Activated B cell treated with CpG ODN at 0.5 μM for 24 hours (primary cell): ENCODE measurements at regions of chr18 and their contacts with region 1.

Region 1: GRCh38 chr18:77054606-77055428 is 77.8 kb downstream of the MBP start:
- DNase-seq: peak; percentile 57
- ATAC-seq: peak; percentile 65
- H3K4me3 Mint-ChIP-seq: peak overlapping the region; percentile 67
- H3K27ac Mint-ChIP-seq: peak overlapping the region; percentile 91
- H3K4me1 Mint-ChIP-seq: peaks cover 65% of the 10 kb centered on the region
- H3K27me3 Mint-ChIP-seq: no peaks in the 10 kb centered on the region
- CTCF ChIP-seq: no peak

Region 2: DNA sequence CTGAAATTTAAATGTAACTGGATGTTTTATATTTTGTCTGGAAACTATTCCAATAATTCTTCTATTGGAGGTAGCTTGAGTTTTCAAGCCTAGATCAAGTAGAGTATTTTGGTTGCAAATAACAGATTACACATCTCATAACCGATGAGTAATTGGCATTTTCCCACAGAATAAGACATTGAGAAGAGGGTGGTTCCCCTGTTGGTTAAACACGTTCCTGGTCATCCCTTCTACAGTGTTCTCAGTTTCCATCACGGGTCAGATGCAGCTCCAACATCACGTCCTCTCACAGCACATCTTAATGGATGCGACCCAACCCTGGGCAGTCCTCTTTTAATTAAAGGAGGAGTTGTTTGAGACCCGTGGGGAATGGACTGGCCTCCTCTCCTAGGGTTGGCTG is 410.8 kb before region 1 on chr18:
- CTCF ChIA-PET with region 1: no interaction called
- POLR2A ChIA-PET with region 1: no interaction called
- intact Hi-C with region 1: no loop called
- DNase-seq: no peak
- ATAC-seq: no peak
- H3K4me3 Mint-ChIP-seq: no peak overlapping the region
- H3K27ac Mint-ChIP-seq: no peak overlapping the region
- H3K4me1 Mint-ChIP-seq: no peaks in the 10 kb centered on the region
- H3K27me3 Mint-ChIP-seq: peaks cover 2% of the 10 kb centered on the region
- CTCF ChIP-seq: no peak

Region 3: DNA sequence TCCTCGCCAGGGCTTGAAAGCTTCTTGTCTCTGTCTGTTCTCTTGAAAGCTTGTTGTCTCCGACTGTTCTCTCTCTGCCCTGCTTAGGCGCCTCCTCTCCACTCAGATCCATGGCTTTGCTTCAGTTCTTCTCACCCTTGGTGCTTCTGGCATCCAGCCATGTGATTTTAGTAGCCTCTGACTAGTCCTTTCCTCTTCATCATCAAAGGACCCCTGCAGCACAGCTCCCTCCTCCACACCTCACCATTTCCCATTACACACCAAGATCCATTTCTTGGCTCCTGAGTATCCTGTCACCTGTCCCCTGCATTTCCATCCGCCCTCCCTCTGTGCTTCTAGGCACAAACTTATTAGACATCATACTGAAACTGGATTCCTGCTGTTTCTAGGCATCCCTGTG is 173.1 kb before region 1 on chr18:
- CTCF ChIA-PET with region 1: no interaction called
- POLR2A ChIA-PET with region 1: no interaction called
- intact Hi-C with region 1: no loop called
- DNase-seq: no peak
- ATAC-seq: no peak
- H3K4me3 Mint-ChIP-seq: no peak overlapping the region
- H3K27ac Mint-ChIP-seq: no peak overlapping the region
- H3K4me1 Mint-ChIP-seq: no peaks in the 10 kb centered on the region
- H3K27me3 Mint-ChIP-seq: no peaks in the 10 kb centered on the region
- CTCF ChIP-seq: no peak

Region 4: GRCh38 chr18:76963936-76964335 is 90.9 kb before region 1 on chr18:
- CTCF ChIA-PET with region 1: no interaction called
- POLR2A ChIA-PET with region 1: interaction called, 3 read pairs
- intact Hi-C with region 1: loop called (anchors 1 kb)
- DNase-seq: no peak
- ATAC-seq: no peak
- H3K4me3 Mint-ChIP-seq: peak overlapping the region; percentile 45
- H3K27ac Mint-ChIP-seq: no peak overlapping the region
- H3K4me1 Mint-ChIP-seq: no peaks in the 10 kb centered on the region
- H3K27me3 Mint-ChIP-seq: no peaks in the 10 kb centered on the region
- CTCF ChIP-seq: no peak

Region 5: GRCh38 chr18:77079954-77080682 is 25.3 kb after region 1 on chr18:
- CTCF ChIA-PET with region 1: interaction called, 4 read pairs
- POLR2A ChIA-PET with region 1: interaction called, 9 read pairs
- intact Hi-C with region 1: loop called (anchors 1 kb)
- DNase-seq: peak; percentile 60
- ATAC-seq: peak; percentile 99
- H3K4me3 Mint-ChIP-seq: peak overlapping the region; percentile 45
- H3K27ac Mint-ChIP-seq: peak overlapping the region; percentile 84
- H3K4me1 Mint-ChIP-seq: peaks cover 52% of the 10 kb centered on the region
- H3K27me3 Mint-ChIP-seq: no peaks in the 10 kb centered on the region
- CTCF ChIP-seq: no peak

Region 6: GRCh38 chr18:77101410-77102258 is 46.8 kb after region 1 on chr18:
- CTCF ChIA-PET with region 1: interaction called, 4 read pairs
- POLR2A ChIA-PET with region 1: interaction called, 40 read pairs
- intact Hi-C with region 1: loop called (anchors 1 kb)
- DNase-seq: no peak
- ATAC-seq: peak; percentile 68
- H3K4me3 Mint-ChIP-seq: peak overlapping the region; percentile 79
- H3K27ac Mint-ChIP-seq: peak overlapping the region; percentile 95
- H3K4me1 Mint-ChIP-seq: peaks cover 92% of the 10 kb centered on the region
- H3K27me3 Mint-ChIP-seq: no peaks in the 10 kb centered on the region
- CTCF ChIP-seq: no peak

Region 7: GRCh38 chr18:77207540-77207939 is 152.7 kb after region 1 on chr18:
- CTCF ChIA-PET with region 1: interaction called, 10 read pairs
- POLR2A ChIA-PET with region 1: interaction called, 8 read pairs
- intact Hi-C with region 1: loop called (anchors 2 kb)
- DNase-seq: no peak
- ATAC-seq: peak; percentile 87
- H3K4me3 Mint-ChIP-seq: peak overlapping the region; percentile 64
- H3K27ac Mint-ChIP-seq: peak overlapping the region; percentile 74
- H3K4me1 Mint-ChIP-seq: peaks cover 25% of the 10 kb centered on the region
- H3K27me3 Mint-ChIP-seq: peaks cover 2% of the 10 kb centered on the region
- CTCF ChIP-seq: no peak